ENCODE measurements at regions of chr6 and their contacts with region 1.

Region 1: DNA sequence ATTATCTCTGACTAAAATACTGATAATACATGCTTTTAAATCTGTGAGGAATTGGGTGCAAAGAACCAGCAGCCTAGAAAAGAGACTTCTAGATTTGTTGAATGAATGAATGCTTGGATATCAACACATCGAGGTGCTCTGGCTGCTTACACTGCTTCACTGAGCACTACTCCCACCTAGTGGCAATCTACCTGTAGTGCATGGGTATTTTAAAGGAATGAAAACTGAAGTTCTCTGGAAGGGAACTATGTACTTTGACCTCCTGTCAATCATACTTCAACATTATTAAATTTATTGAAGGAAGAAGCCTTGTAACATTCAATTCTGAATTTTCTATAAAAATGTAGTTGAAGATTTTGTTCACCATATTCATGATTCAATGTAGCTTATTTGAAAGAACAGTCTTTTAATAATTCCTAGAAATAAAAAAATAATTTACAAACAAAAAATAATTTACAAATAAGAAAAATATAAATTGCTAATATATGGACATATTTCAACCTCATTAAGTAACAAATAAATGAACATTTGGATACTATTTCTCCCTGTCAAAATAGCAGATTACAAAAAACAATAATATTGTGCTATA is 111.2 kb upstream of the MMS22L start:
- DNase-seq: no peak
- ATAC-seq: peak; percentile 79 to 90
- H3K4me3 ChIP-seq: no peak overlapping the region
- H3K27ac ChIP-seq: no peak overlapping the region
- H3K4me1 ChIP-seq: no peaks in the 10 kb centered on the region
- H3K27me3 ChIP-seq: no peaks in the 10 kb centered on the region
- CTCF ChIP-seq: peak; percentile 90

Region 2: GRCh38 chr6:97068211-97068610 is 326.0 kb before region 1 on chr6:
- intact Hi-C with region 1: no loop called
- DNase-seq: no peak
- ATAC-seq: no peak
- H3K4me3 ChIP-seq: no peak overlapping the region
- H3K27ac ChIP-seq: no peak overlapping the region
- H3K4me1 ChIP-seq: no peaks in the 10 kb centered on the region
- H3K27me3 ChIP-seq: no peaks in the 10 kb centered on the region
- CTCF ChIP-seq: peak; percentile 42

Region 3: GRCh38 chr6:97186416-97186999 is 207.7 kb before region 1 on chr6:
- intact Hi-C with region 1: loop called (anchors 10 kb)
- DNase-seq: peak; percentile 55
- ATAC-seq: peak; percentile 72 to 86
- H3K4me3 ChIP-seq: no peak overlapping the region
- H3K27ac ChIP-seq: no peak overlapping the region
- H3K4me1 ChIP-seq: no peaks in the 10 kb centered on the region
- H3K27me3 ChIP-seq: no peaks in the 10 kb centered on the region
- CTCF ChIP-seq: peak; percentile 88

Region 4: DNA sequence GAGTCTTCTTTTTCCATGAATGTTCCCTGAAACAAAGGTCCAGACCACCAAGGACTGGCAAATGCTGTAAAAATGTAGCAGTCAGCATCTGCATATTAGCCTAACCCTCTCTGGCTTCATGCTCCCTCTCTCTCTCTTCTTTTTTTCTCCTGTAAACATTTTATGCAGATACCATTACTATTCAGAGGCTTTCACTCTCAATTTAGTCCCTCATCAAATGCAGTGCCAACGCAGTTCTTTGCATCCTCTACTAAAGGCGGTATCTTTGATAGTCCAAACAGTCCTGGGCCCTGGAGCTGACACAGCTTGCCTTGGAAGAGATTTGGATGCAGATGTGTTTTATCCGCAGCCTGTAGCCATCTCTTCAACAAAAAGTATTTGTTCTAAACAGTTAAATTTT is 55.8 kb after region 1 on chr6:
- intact Hi-C with region 1: no loop called
- DNase-seq: no peak
- ATAC-seq: no peak
- H3K4me3 ChIP-seq: no peak overlapping the region
- H3K27ac ChIP-seq: no peak overlapping the region
- H3K4me1 ChIP-seq: no peaks in the 10 kb centered on the region
- H3K27me3 ChIP-seq: no peaks in the 10 kb centered on the region
- CTCF ChIP-seq: no peak

Region 5: DNA sequence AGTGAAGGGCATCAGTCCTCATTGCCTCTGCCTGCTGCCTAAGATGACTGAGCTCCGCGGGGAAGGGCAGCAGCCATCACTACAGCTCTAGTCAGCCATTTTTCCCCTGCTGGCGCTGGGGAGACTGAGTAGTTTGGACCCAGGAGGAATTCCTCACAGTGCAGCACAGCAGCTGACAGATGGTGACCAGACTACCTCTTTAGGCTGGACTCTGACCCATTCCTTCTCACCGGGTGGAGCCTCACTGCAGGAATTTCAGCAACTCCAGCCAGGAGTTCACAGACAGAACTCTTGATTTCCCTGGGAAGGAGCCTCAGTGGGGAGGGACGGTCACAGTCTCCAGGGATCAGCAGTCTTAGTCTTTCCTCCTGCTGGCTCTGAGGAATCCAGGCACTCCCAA is 380.8 kb after region 1 on chr6:
- intact Hi-C with region 1: no loop called
- DNase-seq: no peak
- ATAC-seq: no peak
- H3K4me3 ChIP-seq: no peak overlapping the region
- H3K27ac ChIP-seq: no peak overlapping the region
- H3K4me1 ChIP-seq: no peaks in the 10 kb centered on the region
- H3K27me3 ChIP-seq: no peaks in the 10 kb centered on the region
- CTCF ChIP-seq: no peak